Activated T-helper 1 cell treated with anti-CD3 and anti-CD28 coated beads, Interleukin-12 subunit alpha, Interleukin-12 subunit beta, Interleukin-2, Interleukin-4 antibody, amounts not matched to agents 30 ng/mL and 10 ng/mL and 1 ng/mL, durations not matched to agents 14 hours and 24 hours and 36 hours (primary cell): ENCODE measurements at regions of chr14 and their contacts with region 1.

Region 1: GRCh38 chr14:80954687-80955299 is 628 bp upstream of the TSHR start:
- DNase-seq: peak; percentile 67
- H3K4me3 Mint-ChIP-seq: peak overlapping the region; percentile 88
- H3K27ac Mint-ChIP-seq: peak overlapping the region; percentile 62
- H3K4me1 Mint-ChIP-seq: peaks cover 52% of the 10 kb centered on the region
- H3K27me3 Mint-ChIP-seq: peaks cover 29% of the 10 kb centered on the region

Region 2: GRCh38 chr14:80930836-80931389 is 23.9 kb before region 1 on chr14:
- intact Hi-C with region 1: loop called (anchors 1 kb)
- DNase-seq: peak; percentile 55
- H3K4me3 Mint-ChIP-seq: peak overlapping the region; percentile 27
- H3K27ac Mint-ChIP-seq: peak overlapping the region; percentile 64
- H3K4me1 Mint-ChIP-seq: peaks cover 58% of the 10 kb centered on the region
- H3K27me3 Mint-ChIP-seq: no peaks in the 10 kb centered on the region

Region 3: GRCh38 chr14:80973931-80974641 is 19.3 kb after region 1 on chr14:
- intact Hi-C with region 1: loop called (anchors 1 kb)
- DNase-seq: no peak
- H3K4me3 Mint-ChIP-seq: no peak overlapping the region
- H3K27ac Mint-ChIP-seq: no peak overlapping the region
- H3K4me1 Mint-ChIP-seq: peaks cover 45% of the 10 kb centered on the region
- H3K27me3 Mint-ChIP-seq: peaks cover 12% of the 10 kb centered on the region

Region 4: GRCh38 chr14:81062816-81063215 is 108.0 kb after region 1 on chr14:
- intact Hi-C with region 1: loop called (anchors 5 kb)
- DNase-seq: no peak
- H3K4me3 Mint-ChIP-seq: no peak overlapping the region
- H3K27ac Mint-ChIP-seq: no peak overlapping the region
- H3K4me1 Mint-ChIP-seq: no peaks in the 10 kb centered on the region
- H3K27me3 Mint-ChIP-seq: peaks cover 3% of the 10 kb centered on the region

Region 5: DNA sequence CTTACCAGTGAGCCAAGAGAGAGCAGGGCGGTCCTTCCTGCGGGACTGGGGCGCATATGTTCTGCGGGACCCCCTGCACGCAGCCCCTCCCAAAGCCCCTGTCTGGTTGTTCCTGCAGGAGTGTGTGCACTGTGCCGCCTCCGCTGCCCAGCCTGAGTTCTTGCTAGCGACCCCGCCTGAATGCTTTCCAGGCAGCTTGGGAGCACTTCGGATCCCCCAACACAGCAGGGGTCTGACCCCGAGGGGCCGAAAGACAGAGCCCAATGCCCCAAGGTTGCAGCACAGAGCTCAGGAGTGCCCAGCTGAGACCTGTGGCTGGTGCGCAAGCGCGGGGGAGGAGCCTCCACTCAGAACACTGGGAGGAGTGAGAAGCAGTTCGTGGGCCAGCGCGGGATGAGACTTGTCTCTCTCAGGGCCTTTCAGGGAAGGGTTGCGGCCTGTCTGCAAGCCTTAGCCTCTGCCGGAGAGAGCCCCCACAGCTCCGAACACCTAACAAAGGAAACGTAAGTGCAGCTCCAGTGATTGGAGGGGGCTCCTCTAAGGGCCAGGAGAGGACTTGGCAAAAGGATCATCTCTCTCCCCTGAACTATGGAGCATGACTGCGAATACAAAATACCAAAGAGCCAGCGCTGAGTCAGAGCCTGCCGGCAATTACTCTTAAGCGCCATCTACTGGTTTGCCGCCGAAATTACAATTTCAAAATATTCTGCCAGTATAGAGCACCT is 215.5 kb after region 1 on chr14:
- intact Hi-C with region 1: loop called (anchors 1 kb)
- DNase-seq: peak; percentile 82
- H3K4me3 Mint-ChIP-seq: peak overlapping the region; percentile 89
- H3K27ac Mint-ChIP-seq: peak overlapping the region; percentile 94
- H3K4me1 Mint-ChIP-seq: peaks cover 40% of the 10 kb centered on the region
- H3K27me3 Mint-ChIP-seq: no peaks in the 10 kb centered on the region

Region 6: GRCh38 chr14:81464247-81465002 is 509.6 kb after region 1 on chr14:
- intact Hi-C with region 1: loop called (anchors 2 kb)
- DNase-seq: peak; percentile 57
- H3K4me3 Mint-ChIP-seq: peak overlapping the region; percentile 77
- H3K27ac Mint-ChIP-seq: peak overlapping the region; percentile 63
- H3K4me1 Mint-ChIP-seq: peaks cover 12% of the 10 kb centered on the region
- H3K27me3 Mint-ChIP-seq: no peaks in the 10 kb centered on the region